Tibial artery (tissue), 4 donors: ENCODE measurements at regions of chr7 and their contacts with region 1.

Region 1: DNA sequence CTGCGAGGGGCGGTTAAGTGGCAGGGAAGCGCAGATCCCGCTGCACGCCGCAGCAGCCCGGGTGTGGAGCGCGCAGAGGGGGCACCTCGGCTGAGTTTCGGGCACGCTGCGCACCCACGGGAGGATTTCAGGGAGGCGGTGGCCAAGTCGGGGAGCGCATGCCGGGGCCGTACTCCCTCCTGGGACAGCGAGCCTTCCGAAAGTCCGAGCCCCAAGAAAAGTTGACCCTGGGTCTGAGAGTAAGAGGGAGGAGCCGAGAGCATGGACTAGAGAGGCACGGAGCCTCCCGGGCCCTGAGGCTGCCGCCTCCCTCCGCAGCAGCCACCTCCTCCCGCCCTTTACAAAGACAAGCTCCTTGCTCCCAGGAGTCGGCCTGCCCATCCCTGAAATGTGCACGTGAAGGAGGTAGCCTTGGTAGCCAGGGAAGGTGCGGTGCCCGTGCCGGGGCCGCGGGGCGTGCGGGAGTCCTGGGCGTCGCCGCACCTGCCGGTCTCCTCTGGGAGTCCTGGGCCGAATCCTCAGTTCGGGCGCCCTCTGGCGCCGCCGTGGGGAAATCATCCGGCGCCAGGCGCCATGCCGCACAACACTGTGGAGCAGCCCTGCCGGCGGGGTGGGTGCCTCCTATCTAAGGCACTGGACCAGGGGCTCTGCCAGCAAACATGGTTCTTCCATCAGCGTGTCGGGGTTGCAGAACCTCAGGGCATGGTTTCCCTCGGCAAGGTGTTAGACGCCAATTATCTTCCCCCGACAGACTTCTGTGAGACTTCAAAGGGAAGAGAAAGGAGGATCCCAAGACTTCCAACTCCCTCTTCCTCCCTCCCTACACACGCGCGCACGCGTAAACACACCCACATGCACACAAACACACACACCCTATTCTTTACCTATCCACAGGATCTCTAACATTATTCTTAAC is 104.0 kb downstream of the TRIL start:
- DNase-seq: peak; percentile 72 to 87
- H3K4me3 ChIP-seq: peak overlapping the region; percentile 50 to 66
- H3K27ac ChIP-seq: no peak overlapping the region
- H3K4me1 ChIP-seq: peaks cover 0 to 12% (median 9%) of the 10 kb centered on the region in 4 donors
- H3K27me3 ChIP-seq: peaks cover 0 to 13% of the 10 kb centered on the region in 2 donors
- CTCF ChIP-seq: peak; percentile 86 to 91

Region 2: GRCh38 chr7:27784393-27785053 is 1069.6 kb before region 1 on chr7:
- intact Hi-C with region 1: no loop called
- DNase-seq: no peak
- H3K4me3 ChIP-seq: no peak overlapping the region
- H3K27ac ChIP-seq: no peak overlapping the region
- H3K4me1 ChIP-seq: peaks cover 0 to 39% (median 7%) of the 10 kb centered on the region in 4 donors
- H3K27me3 ChIP-seq: no peaks in the 10 kb centered on the region
- CTCF ChIP-seq: peak; percentile 39 to 44

Region 3: DNA sequence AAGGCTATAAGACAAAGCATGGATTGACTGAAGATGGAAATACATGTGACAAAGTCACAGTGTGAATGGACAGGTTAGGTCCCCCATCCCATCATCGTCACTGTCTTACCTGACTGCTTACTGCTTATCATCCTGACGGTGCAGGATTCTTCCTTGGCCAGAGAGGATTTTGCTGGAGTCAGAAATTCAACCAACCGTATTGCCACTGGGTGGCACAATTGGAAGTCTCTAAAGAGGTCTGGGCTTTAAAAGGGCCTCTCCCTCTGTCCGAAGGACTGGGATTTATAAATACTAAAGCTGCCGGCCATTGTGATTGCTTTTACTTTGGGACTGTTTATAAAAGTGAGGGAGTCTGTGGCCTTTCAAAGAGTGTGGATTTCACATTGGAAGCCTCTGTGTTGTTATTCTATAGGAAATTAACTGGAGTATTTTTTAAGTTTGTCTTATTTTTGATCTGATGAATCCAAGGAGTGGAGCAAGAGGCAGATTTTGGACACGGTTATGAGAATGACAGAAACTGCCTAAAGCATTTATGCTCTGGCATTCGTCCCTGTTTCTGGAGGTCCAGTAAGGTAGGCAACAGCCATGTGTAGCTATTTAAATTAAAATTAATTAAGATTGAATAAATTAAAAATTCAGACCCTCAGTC is 555.1 kb before region 1 on chr7:
- intact Hi-C with region 1: loop called (anchors 10 kb)
- DNase-seq: no peak
- H3K4me3 ChIP-seq: no peak overlapping the region
- H3K27ac ChIP-seq: no peak overlapping the region
- H3K4me1 ChIP-seq: no peaks in the 10 kb centered on the region
- H3K27me3 ChIP-seq: no peaks in the 10 kb centered on the region
- CTCF ChIP-seq: peak; percentile 24 to 30

Region 4: GRCh38 chr7:28389504-28390395 is 464.3 kb before region 1 on chr7:
- intact Hi-C with region 1: loop called (anchors 2 kb)
- DNase-seq: no peak
- H3K4me3 ChIP-seq: peak overlapping the region; percentile 20 to 40
- H3K27ac ChIP-seq: no peak overlapping the region
- H3K4me1 ChIP-seq: peaks cover 0 to 10% (median 0%) of the 10 kb centered on the region in 4 donors
- H3K27me3 ChIP-seq: no peaks in the 10 kb centered on the region
- CTCF ChIP-seq: peak; percentile 68 to 80

Region 5: DNA sequence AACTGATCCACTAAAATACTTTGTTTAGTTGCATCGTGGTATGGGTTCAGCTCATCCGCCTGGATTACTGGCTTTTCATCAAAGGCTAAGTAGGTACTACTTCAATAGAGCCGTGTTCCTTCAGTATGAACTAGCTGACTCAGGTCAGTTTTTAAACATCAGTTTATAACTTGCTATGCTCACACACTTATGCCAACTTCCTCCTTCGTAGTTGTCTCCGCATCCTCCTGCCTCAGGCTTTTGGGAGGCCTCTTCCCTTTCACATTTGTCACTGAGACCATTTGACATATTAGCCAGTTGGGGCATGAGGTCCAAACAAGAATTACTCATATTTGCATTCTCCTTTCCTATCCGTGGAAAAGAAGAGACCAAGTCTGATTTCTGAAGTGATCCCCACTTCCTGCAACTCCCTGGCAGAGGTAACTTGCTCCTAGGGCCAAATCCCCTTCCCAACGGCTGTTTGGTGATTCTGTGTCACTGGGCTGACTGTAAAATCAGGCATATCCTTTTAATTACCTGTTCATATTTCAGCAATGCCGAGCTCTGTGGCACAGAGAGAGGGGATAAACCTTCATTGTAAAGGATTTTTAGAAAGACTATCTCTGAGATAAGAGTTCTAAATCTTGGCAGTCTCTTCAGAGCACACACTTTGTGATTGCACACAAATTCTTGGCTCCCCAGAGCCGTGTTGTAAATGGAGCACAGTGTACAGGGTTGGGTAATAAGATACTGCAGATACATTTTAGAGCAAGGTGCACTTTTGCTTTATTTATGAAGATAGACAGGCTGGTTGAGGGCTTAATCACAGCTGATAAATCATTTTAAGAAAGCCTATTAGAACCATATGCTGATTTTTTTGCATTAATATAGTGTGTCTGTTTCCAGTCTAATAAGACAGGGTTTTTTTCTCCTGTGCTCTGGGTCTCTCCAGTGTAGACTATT is 333.7 kb before region 1 on chr7:
- intact Hi-C with region 1: loop called (anchors 10 kb)
- DNase-seq: no peak
- H3K4me3 ChIP-seq: no peak overlapping the region
- H3K27ac ChIP-seq: no peak overlapping the region
- H3K4me1 ChIP-seq: no peaks in the 10 kb centered on the region
- H3K27me3 ChIP-seq: no peaks in the 10 kb centered on the region
- CTCF ChIP-seq: no peak

Region 6: GRCh38 chr7:28615091-28615490 is 239.0 kb before region 1 on chr7:
- intact Hi-C with region 1: loop called (anchors 10 kb)
- DNase-seq: no peak
- H3K4me3 ChIP-seq: no peak overlapping the region
- H3K27ac ChIP-seq: no peak overlapping the region
- H3K4me1 ChIP-seq: peaks cover 0 to 10% (median 0%) of the 10 kb centered on the region in 4 donors
- H3K27me3 ChIP-seq: no peaks in the 10 kb centered on the region
- CTCF ChIP-seq: peak in 1 of 2 experiments; percentile 20